Panc1 (cell line): ENCODE measurements at regions of chr10 and their contacts with region 1.

Region 1: DNA sequence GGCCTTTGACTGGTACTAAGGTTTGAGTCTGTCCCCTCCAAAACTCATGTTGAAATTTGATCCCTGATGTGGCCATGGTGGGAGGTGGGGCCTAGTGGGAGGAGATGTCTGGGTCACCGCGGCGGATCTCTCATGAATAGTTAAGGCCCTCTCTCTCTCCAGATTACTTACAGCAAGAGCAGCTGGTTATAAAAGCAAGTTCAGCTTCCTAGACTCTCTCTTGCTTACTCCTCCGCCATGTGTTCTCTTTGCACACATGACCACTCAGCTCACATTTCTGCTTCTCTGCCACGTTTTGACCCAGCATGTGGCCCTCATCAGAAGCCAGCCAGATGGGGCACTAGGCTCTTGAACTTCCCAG is 29.9 kb upstream of the ZMIZ1 start:
- DNase-seq: no peak
- ATAC-seq: no peak
- H3K4me3 ChIP-seq: no peak overlapping the region
- H3K27ac ChIP-seq: no peak overlapping the region
- H3K4me1 ChIP-seq: no peaks in the 10 kb centered on the region
- H3K27me3 ChIP-seq: peaks cover 15% of the 10 kb centered on the region
- CTCF ChIP-seq: no peak

Region 2: GRCh38 chr10:78276139-78276538 is 762.7 kb before region 1 on chr10:
- CTCF ChIA-PET with region 1: no interaction called
- POLR2A ChIA-PET with region 1: interaction called, 14 read pairs
- in situ Hi-C with region 1: no loop called
- intact Hi-C with region 1: no loop called
- DNase-seq: no peak
- ATAC-seq: no peak
- H3K4me3 ChIP-seq: no peak overlapping the region
- H3K27ac ChIP-seq: no peak overlapping the region
- H3K4me1 ChIP-seq: no peaks in the 10 kb centered on the region
- H3K27me3 ChIP-seq: peaks cover 9% of the 10 kb centered on the region; the same call in 1 of the 2 replicates
- CTCF ChIP-seq: no peak

Region 3: GRCh38 chr10:79084012-79084971 is 45.5 kb after region 1 on chr10:
- CTCF ChIA-PET with region 1: no interaction called
- POLR2A ChIA-PET with region 1: no interaction called
- in situ Hi-C with region 1: no loop called
- intact Hi-C with region 1: no loop called
- DNase-seq: no peak
- ATAC-seq: no peak
- H3K4me3 ChIP-seq: no peak overlapping the region
- H3K27ac ChIP-seq: peak overlapping the region; percentile 51
- H3K4me1 ChIP-seq: peaks cover 100% of the 10 kb centered on the region
- H3K27me3 ChIP-seq: no peaks in the 10 kb centered on the region
- CTCF ChIP-seq: no peak